Mammary epithelial cell (primary cell): ENCODE measurements at regions of chr12 and their contacts with region 1.

Region 1: DNA sequence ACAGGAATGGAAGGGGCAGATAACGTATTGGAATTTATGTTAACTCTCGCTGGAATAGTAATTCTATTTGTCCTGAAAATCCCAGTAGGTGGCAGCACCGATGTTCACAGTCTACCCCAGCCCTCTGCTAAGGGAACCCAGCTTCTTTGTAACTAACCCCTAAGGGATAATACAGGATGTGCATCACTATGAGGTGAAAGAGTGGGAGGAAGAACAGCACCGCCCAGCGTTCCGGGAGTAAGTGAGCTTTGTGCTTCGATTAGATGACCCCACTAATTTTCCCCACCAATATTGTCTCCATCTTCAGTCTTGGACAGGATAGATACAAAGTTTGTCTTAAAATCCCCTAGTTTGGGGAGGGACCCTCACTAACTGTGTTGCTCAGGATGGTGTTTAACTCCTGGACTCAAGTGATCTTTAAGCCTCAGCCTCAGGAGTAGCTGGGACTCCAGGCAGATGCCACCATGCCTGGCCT is 2.7 kb downstream of the SLC2A3 start:
- DNase-seq: peak; percentile 85
- H3K4me3 ChIP-seq: peak overlapping the region; percentile 33 to 66 (median 64)
- H3K27ac ChIP-seq: peak overlapping the region; percentile 62
- H3K4me1 ChIP-seq: peaks cover 22% of the 10 kb centered on the region
- H3K27me3 ChIP-seq: no peaks in the 10 kb centered on the region
- CTCF ChIP-seq: peak; percentile 76 to 77

Region 2: DNA sequence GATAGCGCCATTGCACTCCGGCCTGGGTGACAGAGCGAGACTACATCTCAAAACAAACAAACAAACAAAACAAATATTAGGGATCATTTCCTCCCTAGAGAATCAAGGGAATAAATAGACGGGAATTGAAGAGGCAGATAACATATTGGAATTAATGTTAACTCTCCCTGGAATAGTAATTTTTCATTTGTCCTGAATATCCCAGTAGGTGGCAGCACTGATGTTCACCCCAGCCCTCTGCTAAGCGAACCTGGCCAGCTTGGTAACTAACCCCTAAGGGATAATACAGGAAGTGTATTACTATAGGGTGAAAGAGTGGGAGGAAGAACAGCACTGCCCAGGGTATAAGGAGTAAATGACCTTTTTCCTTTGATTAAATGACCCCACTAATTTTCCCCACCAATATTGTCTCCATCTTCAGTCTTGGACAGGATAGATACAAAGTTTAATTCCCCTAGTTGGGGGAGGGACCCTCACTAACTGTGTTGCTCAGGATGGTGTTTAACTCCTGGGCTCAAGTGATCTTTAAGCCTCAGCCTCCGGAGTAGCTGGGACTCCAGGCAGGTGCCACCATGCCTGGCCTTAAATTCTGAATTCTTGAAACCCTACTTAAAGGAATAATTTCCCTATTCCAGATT is 101.1 kb before region 1 on chr12:
- CTCF ChIA-PET with region 1: no interaction called
- dilution Hi-C with region 1: no loop called
- in situ Hi-C with region 1: no loop called
- intact Hi-C with region 1: loop called (anchors 5 kb)
- DNase-seq: peak; percentile 22
- H3K4me3 ChIP-seq: no peak overlapping the region
- H3K27ac ChIP-seq: no peak overlapping the region
- H3K4me1 ChIP-seq: no peaks in the 10 kb centered on the region
- H3K27me3 ChIP-seq: no peaks in the 10 kb centered on the region
- CTCF ChIP-seq: peak; percentile 56 to 69

Region 3: GRCh38 chr12:7844116-7844515 is 89.2 kb before region 1 on chr12:
- CTCF ChIA-PET with region 1: no interaction called
- dilution Hi-C with region 1: no loop called
- in situ Hi-C with region 1: no loop called
- intact Hi-C with region 1: no loop called
- DNase-seq: no peak
- H3K4me3 ChIP-seq: no peak overlapping the region
- H3K27ac ChIP-seq: no peak overlapping the region
- H3K4me1 ChIP-seq: no peaks in the 10 kb centered on the region
- H3K27me3 ChIP-seq: no peaks in the 10 kb centered on the region
- CTCF ChIP-seq: no peak

Region 4: DNA sequence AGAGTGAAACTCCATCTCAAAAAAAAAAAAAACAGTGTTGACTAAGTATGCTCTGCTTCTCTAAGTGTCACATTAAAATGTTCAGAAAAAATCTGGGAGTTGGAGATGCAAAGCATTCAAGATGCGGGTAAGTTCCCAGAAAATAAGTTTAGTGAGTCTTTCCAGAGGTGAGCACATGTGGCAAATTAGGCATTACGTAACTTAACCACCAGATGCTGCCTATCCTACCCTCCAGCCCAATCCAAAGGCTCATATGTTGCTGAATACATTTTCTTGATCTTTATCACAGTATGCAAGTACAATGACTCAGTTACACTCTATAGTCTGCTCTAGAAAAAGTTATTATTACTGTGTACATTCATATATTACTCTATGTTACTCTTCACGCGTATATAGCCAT is 64.2 kb before region 1 on chr12:
- CTCF ChIA-PET with region 1: no interaction called
- dilution Hi-C with region 1: loop called (anchors 5 kb)
- in situ Hi-C with region 1: loop called in 1 of 2 experiments (anchors 10 kb)
- intact Hi-C with region 1: no loop called
- DNase-seq: peak; percentile 71
- H3K4me3 ChIP-seq: no peak overlapping the region
- H3K27ac ChIP-seq: no peak overlapping the region
- H3K4me1 ChIP-seq: no peaks in the 10 kb centered on the region
- H3K27me3 ChIP-seq: peaks cover 11% of the 10 kb centered on the region
- CTCF ChIP-seq: no peak

Region 5: GRCh38 chr12:7948589-7949260 is 15.4 kb after region 1 on chr12:
- CTCF ChIA-PET with region 1: no interaction called
- dilution Hi-C with region 1: no loop called
- in situ Hi-C with region 1: no loop called
- intact Hi-C with region 1: no loop called
- DNase-seq: no peak
- H3K4me3 ChIP-seq: no peak overlapping the region
- H3K27ac ChIP-seq: no peak overlapping the region
- H3K4me1 ChIP-seq: no peaks in the 10 kb centered on the region
- H3K27me3 ChIP-seq: no peaks in the 10 kb centered on the region
- CTCF ChIP-seq: no peak

Region 6: DNA sequence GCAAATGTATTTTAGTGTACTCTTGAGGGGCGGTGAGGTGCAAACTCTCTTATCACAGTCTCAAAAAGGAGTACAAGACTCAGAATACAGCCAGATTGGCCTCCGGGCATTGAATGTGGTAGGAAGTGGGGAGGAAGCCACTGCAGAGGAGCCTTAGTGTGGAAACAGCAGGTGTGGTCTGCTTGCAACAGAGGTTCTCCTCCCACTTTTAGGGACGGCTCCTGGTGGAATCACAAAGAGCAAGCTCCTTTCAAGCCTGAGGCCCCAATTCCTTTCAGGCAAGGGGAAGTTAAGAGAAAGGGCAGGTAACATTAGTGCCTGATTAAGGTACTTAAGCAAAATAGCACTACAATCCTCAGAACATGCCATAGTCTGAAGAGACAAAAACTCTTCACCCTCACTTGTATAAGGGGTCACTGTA is 26.4 kb after region 1 on chr12:
- CTCF ChIA-PET with region 1: interaction called, 17 read pairs
- dilution Hi-C with region 1: no loop called
- in situ Hi-C with region 1: no loop called
- intact Hi-C with region 1: loop called (anchors 1 kb)
- DNase-seq: peak; percentile 63
- H3K4me3 ChIP-seq: no peak overlapping the region
- H3K27ac ChIP-seq: peak overlapping the region; percentile 38
- H3K4me1 ChIP-seq: peaks cover 27% of the 10 kb centered on the region
- H3K27me3 ChIP-seq: no peaks in the 10 kb centered on the region
- CTCF ChIP-seq: no peak

Region 7: DNA sequence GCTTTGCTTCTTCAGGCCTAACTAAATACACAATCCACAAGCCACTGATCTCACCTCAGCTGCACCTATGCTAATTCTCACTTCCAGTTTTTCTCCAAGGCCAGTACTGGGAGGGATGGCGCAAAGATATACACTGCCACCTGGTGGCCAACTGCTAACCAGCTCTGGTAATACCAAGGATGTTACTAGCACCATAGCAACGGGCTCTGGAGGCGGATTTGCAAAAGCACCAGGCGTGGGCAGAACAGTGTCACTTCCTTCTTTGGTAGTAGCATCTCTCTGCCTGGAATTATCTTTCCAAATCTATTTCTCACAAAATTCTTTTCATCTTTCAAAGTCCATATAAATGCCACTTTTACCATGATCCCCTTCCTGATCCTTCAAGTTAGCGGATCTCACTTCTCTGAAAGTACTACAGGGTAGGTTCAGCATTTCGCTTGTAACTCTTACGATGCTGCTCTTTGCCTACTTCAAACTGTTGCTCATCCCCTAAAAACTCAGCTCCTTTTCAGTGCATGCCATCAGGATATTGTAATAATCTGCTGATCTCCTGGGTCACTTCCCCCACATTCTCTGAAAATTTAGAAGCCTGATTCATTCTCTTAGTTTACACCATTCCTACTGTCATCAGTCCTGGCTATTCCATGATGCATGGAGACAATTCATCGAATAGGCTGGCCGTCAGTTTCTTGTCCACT is 62.1 kb after region 1 on chr12:
- CTCF ChIA-PET with region 1: interaction called, 4 read pairs
- dilution Hi-C with region 1: no loop called
- in situ Hi-C with region 1: loop called in 1 of 2 experiments (anchors 5 kb)
- intact Hi-C with region 1: loop called (anchors 1 kb)
- DNase-seq: peak; percentile 77
- H3K4me3 ChIP-seq: no peak overlapping the region
- H3K27ac ChIP-seq: peak overlapping the region; percentile 40
- H3K4me1 ChIP-seq: peaks cover 10% of the 10 kb centered on the region
- H3K27me3 ChIP-seq: no peaks in the 10 kb centered on the region
- CTCF ChIP-seq: peak; percentile 69 to 73

Region 8: DNA sequence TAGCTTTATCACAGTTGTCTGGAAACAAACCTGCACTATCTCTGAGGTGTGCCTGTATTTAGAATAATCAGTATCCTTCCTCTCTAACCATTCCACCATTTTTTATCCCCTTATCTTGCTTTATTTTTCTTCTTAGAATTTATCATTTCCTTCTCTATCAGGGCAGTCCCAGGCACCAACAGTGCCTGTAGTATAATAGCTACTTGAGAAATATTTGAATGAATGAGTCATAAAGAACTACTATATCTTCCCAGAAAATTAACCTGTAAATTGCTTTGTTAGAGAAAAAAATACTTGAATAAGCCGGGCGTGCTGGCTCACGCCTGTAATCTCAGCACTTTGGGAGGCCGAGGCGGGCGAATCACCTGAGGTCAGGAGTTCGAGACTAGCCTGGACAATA is 78.0 kb after region 1 on chr12:
- CTCF ChIA-PET with region 1: no interaction called
- dilution Hi-C with region 1: no loop called
- in situ Hi-C with region 1: no loop called
- intact Hi-C with region 1: no loop called
- DNase-seq: peak; percentile 56
- H3K4me3 ChIP-seq: no peak overlapping the region
- H3K27ac ChIP-seq: no peak overlapping the region
- H3K4me1 ChIP-seq: no peaks in the 10 kb centered on the region
- H3K27me3 ChIP-seq: peaks cover 2% of the 10 kb centered on the region
- CTCF ChIP-seq: no peak

Region 9: DNA sequence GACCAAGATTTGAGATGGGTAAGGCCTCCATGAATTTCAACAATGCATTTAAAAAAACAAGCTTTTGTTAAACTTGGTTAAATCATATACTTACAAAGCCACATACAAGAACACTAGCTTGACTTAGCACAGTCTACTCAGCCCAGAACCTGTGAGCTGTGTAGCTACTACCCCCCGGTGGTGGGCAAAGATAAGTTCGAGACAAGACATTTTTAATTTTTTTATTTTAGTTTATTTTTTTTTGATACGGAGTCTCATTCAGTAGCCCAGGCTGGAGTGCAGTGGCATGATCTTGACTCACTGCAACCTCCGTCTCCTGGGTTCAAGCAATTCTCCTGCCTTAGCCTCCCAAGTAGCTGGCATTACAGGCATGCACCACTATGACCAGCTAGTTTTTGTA is 145.1 kb after region 1 on chr12:
- CTCF ChIA-PET with region 1: interaction called, 9 read pairs
- dilution Hi-C with region 1: no loop called
- in situ Hi-C with region 1: no loop called
- intact Hi-C with region 1: loop called (anchors 1 kb)
- DNase-seq: peak; percentile 37
- H3K4me3 ChIP-seq: no peak overlapping the region
- H3K27ac ChIP-seq: no peak overlapping the region
- H3K4me1 ChIP-seq: peaks cover 24% of the 10 kb centered on the region
- H3K27me3 ChIP-seq: no peaks in the 10 kb centered on the region
- CTCF ChIP-seq: peak; percentile 17 to 35